IMR-90 (cell line): ENCODE measurements at regions of chr15 and their contacts with region 1.

Region 1: DNA sequence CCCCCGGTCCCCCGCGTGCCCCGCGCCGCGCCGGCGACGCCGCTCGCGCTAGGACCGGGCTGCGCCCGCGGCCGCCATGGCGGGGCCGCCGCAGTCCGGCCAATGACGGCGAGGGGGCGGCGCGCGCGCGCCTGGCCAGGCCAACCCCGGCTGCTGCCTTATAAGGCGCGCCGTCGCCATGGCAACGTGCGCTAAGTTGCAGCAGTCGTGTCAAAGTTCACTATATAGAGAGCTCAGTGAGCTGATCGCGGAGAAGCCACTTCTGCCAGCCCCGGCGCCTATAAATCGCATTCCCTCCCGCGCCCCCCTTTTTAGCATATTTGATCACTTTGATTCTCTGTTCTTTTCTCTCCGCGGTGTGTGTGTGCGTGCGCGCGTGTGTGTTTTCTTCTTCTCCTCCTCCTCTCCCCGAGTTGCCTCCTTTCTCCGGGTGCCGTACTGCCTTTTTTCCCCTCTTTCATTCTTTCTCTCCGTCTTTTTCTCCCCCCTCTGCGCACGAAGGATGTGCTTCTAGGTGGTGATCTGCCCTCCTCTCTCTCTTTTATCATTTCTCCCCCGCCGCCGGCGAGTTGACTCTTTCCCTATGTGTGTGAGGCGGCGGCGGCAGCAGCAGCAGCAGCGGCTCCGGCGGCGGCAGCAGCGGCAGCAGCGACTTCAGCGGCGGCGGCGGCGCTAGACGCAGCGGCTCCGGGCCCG is at the start of gene NR2F2:
- DNase-seq: peak; percentile 99
- ATAC-seq: peak; percentile 78
- H3K4me3 ChIP-seq: peak within 1 kb of the TSS; percentile 84
- H3K27ac ChIP-seq: peak within 1 kb of the TSS; percentile 98
- H3K4me1 ChIP-seq: peaks cover 3% of the 10 kb centered on the region
- H3K27me3 ChIP-seq: no peaks in the 10 kb centered on the region
- CTCF ChIP-seq: no peak
- POLR2A ChIP-seq: peak; percentile 88
- RAD21 ChIP-seq: no peak; the same call in 1 of the 2 replicates
- total RNA-seq, gene NR2F2: 20.3 and 28.1 TPM in 2 replicates

Region 2: DNA sequence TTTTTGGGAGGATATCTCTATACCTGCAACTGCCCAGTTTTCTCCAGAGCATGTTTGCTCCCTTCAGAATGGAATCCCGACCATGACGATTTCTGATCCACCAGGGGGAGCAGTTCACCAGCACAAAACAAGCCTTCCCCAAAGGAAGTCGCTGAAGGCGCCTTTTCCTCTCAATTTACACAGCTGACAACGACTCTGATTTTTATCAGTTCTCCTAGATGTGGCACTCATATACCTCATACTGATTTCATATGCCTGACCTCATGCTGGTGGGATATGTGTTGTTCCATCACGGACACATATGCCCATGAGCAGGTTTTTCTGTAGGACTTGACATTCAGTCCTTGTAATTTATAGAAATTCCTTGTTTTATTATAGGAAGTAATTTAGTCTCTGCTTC is 1071.1 kb before region 1 on chr15:
- CTCF ChIA-PET with region 1: interaction called, 5 read pairs
- POLR2A ChIA-PET with region 1: interaction called, 3 read pairs
- dilution Hi-C with region 1: no loop called
- in situ Hi-C with region 1: loop called (anchors 5 kb)
- intact Hi-C with region 1: loop called (anchors 1 kb)
- DNase-seq: peak; percentile 83
- ATAC-seq: peak; percentile 70
- H3K4me3 ChIP-seq: no peak overlapping the region
- H3K27ac ChIP-seq: no peak overlapping the region
- H3K4me1 ChIP-seq: peaks cover 17% of the 10 kb centered on the region
- H3K27me3 ChIP-seq: no peaks in the 10 kb centered on the region
- CTCF ChIP-seq: peak; percentile 86
- POLR2A ChIP-seq: no peak; the same call in 1 of the 2 replicates
- RAD21 ChIP-seq: peak; percentile 98

Region 3: GRCh38 chr15:95409626-95410310 is 920.8 kb before region 1 on chr15:
- CTCF ChIA-PET with region 1: no interaction called
- POLR2A ChIA-PET with region 1: interaction called, 3 read pairs
- dilution Hi-C with region 1: no loop called
- in situ Hi-C with region 1: no loop called
- intact Hi-C with region 1: loop called (anchors 5 kb)
- DNase-seq: peak; percentile 32
- ATAC-seq: no peak
- H3K4me3 ChIP-seq: no peak overlapping the region
- H3K27ac ChIP-seq: no peak overlapping the region
- H3K4me1 ChIP-seq: peaks cover 6% of the 10 kb centered on the region
- H3K27me3 ChIP-seq: no peaks in the 10 kb centered on the region
- CTCF ChIP-seq: no peak
- POLR2A ChIP-seq: no peak
- RAD21 ChIP-seq: no peak

Region 4: GRCh38 chr15:95760501-95760900 is 570.1 kb before region 1 on chr15:
- CTCF ChIA-PET with region 1: no interaction called
- POLR2A ChIA-PET with region 1: no interaction called
- dilution Hi-C with region 1: no loop called
- in situ Hi-C with region 1: no loop called
- intact Hi-C with region 1: loop called (anchors 10 kb)
- DNase-seq: no peak
- ATAC-seq: no peak
- H3K4me3 ChIP-seq: no peak overlapping the region
- H3K27ac ChIP-seq: no peak overlapping the region
- H3K4me1 ChIP-seq: no peaks in the 10 kb centered on the region
- H3K27me3 ChIP-seq: no peaks in the 10 kb centered on the region
- CTCF ChIP-seq: no peak
- POLR2A ChIP-seq: no peak
- RAD21 ChIP-seq: no peak

Region 5: DNA sequence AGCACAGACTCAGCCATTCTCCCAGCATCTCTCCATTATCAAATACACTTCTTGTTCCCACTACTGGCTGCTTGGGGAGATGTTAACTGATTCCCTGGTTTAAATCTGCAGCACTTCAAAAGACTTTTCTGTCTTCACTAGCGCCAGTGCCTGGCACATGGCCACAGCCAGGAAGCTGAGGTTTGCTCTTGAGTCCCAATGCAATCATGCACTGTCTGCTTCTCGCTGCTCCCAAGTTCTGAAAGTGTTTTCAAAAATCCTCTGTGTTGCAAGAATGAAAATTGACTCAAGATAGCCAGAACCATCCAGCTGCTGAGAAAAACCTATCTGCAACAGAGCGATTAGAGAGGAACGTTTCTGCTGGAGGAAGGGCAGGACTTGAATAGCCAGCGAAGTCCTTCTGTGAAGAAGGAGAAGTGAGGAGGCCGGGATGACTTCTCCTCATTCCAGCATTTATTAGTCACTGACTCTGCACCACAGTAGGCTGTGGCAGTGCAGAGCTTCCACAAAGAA is 358.5 kb before region 1 on chr15:
- CTCF ChIA-PET with region 1: no interaction called
- POLR2A ChIA-PET with region 1: no interaction called
- dilution Hi-C with region 1: no loop called
- in situ Hi-C with region 1: no loop called
- intact Hi-C with region 1: loop called (anchors 5 kb)
- DNase-seq: peak; percentile 85
- ATAC-seq: peak; percentile 97
- H3K4me3 ChIP-seq: no peak overlapping the region
- H3K27ac ChIP-seq: no peak overlapping the region
- H3K4me1 ChIP-seq: peaks cover 4% of the 10 kb centered on the region
- H3K27me3 ChIP-seq: no peaks in the 10 kb centered on the region
- CTCF ChIP-seq: no peak
- POLR2A ChIP-seq: no peak
- RAD21 ChIP-seq: no peak

Region 6: GRCh38 chr15:96088650-96089049 is 241.9 kb before region 1 on chr15:
- CTCF ChIA-PET with region 1: no interaction called
- POLR2A ChIA-PET with region 1: no interaction called
- dilution Hi-C with region 1: no loop called
- in situ Hi-C with region 1: no loop called
- intact Hi-C with region 1: loop called (anchors 1 kb)
- DNase-seq: peak; percentile 37
- ATAC-seq: peak; percentile 62
- H3K4me3 ChIP-seq: no peak overlapping the region
- H3K27ac ChIP-seq: peak overlapping the region; percentile 74; the same call in 1 of the 2 replicates
- H3K4me1 ChIP-seq: peaks cover 11% of the 10 kb centered on the region
- H3K27me3 ChIP-seq: no peaks in the 10 kb centered on the region
- CTCF ChIP-seq: no peak
- POLR2A ChIP-seq: no peak
- RAD21 ChIP-seq: no peak

Region 7: DNA sequence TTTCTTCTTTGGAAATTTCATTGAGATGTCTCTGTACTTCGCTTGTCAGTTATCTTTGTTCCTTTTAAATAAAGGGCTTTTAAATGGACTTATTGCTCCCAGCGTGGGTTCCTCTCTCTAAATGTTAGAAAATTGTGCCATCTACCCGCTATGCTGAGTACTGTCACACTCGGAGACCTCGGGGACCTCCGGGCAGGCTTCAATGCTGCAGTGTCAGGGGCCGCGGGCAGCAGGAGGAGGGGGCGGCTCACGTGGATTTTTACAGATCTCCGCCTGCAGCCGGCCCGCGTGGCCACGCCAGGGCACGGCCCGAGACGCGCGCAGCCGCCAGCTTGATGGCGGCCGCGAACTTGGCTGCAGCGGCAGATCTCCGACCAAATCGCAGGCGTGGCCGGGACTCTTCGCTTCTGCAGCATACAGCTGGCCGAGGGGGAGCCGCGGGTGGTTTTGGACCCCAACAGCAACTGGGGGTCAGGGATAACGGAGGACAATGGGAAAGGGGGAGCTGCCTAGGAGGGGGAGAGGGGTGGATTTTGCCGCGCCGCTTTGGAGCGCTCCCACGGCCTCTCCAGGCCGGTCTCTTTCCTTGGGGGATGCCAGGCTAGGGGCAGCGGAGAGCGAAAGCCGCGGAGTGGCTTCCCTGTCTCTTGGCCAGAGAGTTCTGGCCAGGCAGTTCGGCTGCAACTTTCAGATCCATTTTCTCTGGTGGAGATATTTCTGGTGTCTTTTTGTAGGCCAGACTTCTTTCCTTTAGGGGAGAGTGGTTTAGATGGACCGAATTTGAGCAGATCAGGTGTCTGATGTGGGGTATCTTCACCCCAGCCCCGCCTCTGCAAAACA is 15.2 kb after region 1 on chr15:
- CTCF ChIA-PET with region 1: interaction called, 11 read pairs
- POLR2A ChIA-PET with region 1: interaction called, 9 read pairs
- dilution Hi-C with region 1: no loop called
- in situ Hi-C with region 1: no loop called
- intact Hi-C with region 1: no loop called
- DNase-seq: peak; percentile 83
- ATAC-seq: peak; percentile 46
- H3K4me3 ChIP-seq: peak overlapping the region; percentile 40
- H3K27ac ChIP-seq: peak overlapping the region; percentile 88
- H3K4me1 ChIP-seq: peaks cover 49% of the 10 kb centered on the region
- H3K27me3 ChIP-seq: no peaks in the 10 kb centered on the region
- CTCF ChIP-seq: peak; percentile 56
- POLR2A ChIP-seq: no peak
- RAD21 ChIP-seq: peak; percentile 67

Region 8: DNA sequence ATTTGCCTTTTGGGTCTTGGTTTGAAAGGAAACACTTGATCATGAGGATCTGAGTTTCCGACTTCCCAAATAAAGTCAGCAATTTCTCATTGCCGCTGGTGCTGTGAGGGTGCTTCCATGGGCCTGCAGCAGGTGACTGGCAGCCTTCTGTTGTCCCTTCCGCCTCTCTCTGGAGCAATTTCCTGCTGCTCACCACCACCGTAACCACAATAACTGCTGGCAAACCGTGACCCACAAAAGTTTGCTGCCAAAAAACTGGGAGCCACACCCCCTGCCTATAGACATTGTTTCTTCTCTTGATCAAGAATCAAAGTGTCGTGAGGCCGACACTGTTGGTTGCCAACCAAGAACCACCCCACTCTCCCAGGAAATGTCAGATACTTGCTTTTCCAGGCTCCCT is 163.9 kb after region 1 on chr15:
- CTCF ChIA-PET with region 1: no interaction called
- POLR2A ChIA-PET with region 1: no interaction called
- dilution Hi-C with region 1: no loop called
- in situ Hi-C with region 1: no loop called
- intact Hi-C with region 1: no loop called
- DNase-seq: no peak
- ATAC-seq: no peak
- H3K4me3 ChIP-seq: no peak overlapping the region
- H3K27ac ChIP-seq: no peak overlapping the region
- H3K4me1 ChIP-seq: no peaks in the 10 kb centered on the region
- H3K27me3 ChIP-seq: no peaks in the 10 kb centered on the region
- CTCF ChIP-seq: no peak
- POLR2A ChIP-seq: no peak
- RAD21 ChIP-seq: no peak